ENCODE measurements at regions of chr2 and their contacts with region 1.

Region 1: GRCh38 chr2:138814120-138814898 is 34.1 kb upstream of the NXPH2 start:
- DNase-seq: peak; percentile 29
- ATAC-seq: peak; percentile 93
- H3K4me3 Mint-ChIP-seq: no peak overlapping the region
- H3K27ac Mint-ChIP-seq: no peak overlapping the region
- H3K4me1 Mint-ChIP-seq: peaks cover 14% of the 10 kb centered on the region
- H3K27me3 Mint-ChIP-seq: no peaks in the 10 kb centered on the region
- CTCF ChIP-seq: no peak

Region 2: GRCh38 chr2:138622613-138623012 is 191.7 kb before region 1 on chr2:
- CTCF ChIA-PET with region 1: no interaction called
- POLR2A ChIA-PET with region 1: no interaction called
- DNase-seq: no peak
- ATAC-seq: no peak
- H3K4me3 Mint-ChIP-seq: no peak overlapping the region
- H3K27ac Mint-ChIP-seq: no peak overlapping the region
- H3K4me1 Mint-ChIP-seq: no peaks in the 10 kb centered on the region
- H3K27me3 Mint-ChIP-seq: no peaks in the 10 kb centered on the region; the same call in 1 of the 2 replicates
- CTCF ChIP-seq: no peak

Region 3: DNA sequence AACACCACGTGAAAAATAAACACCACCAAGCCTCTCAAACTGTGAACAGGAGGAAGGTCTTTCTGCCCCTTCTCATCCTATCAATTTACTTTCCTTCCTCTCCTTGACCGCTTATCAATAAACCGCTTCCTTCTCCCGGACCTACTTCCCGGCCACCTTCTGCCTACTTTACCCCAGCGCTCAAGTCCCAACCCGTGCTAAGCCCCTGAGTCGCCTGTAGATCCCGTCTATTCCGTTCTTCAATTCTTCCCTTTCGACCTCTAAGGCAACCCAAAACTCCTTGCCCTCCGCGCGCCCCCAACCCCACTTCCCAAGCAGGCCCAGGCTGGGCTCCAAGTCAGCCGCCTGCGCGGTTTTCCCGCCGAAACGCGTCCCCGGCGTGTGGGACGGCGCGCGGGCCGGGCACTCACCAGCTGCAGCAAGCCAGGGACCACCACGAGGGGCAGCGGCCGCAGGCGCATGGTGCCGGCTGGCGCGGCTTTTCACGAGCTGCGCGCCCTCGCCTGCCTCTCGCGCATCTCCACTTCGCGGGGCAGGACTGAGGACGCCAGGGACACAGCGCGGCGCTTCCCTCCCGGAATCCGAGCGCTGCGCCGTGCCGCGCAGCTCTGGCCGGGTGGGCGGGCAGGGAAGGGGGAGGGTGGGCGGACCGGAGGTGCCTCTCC is 34.4 kb before region 1 on chr2 and contains the start of gene NXPH2:
- CTCF ChIA-PET with region 1: interaction called, 10 read pairs
- POLR2A ChIA-PET with region 1: no interaction called
- DNase-seq: peak; percentile 59
- ATAC-seq: peak; percentile 20
- H3K4me3 Mint-ChIP-seq: peak within 1 kb of the TSS; percentile 83
- H3K27ac Mint-ChIP-seq: no peak within 1 kb of the TSS
- H3K4me1 Mint-ChIP-seq: peaks cover 45% of the 10 kb centered on the region
- H3K27me3 Mint-ChIP-seq: peaks cover 63% of the 10 kb centered on the region
- CTCF ChIP-seq: no peak
- total RNA-seq, gene NXPH2: 0.55 to 0.94 TPM (median 0.92 TPM) in 3 replicates

Region 4: DNA sequence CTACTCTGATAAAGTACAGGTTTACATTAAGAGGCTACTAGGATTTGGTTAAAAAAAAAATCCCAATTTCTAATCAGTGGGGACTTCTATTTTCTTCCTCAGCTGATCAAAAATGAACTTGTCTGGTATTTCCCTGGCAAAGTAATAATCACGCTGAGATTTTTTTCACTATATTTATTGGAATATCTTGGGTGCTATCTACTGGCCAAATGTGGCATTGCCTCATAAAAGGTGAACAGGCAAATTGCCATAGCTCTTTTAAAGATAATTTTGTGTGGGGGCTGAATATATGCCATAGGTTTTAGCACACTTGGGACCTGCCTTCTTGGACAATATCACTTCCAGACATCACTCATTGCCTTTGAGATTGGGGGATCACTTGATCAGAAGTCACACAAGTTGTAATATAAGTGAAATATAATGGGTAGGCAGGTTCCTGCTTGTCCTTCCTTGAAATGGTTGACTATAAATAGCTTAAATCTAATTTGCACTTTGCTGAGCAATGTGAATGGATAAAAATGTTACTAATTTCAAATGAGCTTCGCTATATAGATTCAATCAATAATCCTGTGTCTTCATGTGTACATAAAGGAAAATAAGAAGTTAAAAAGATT is 27.1 kb before region 1 on chr2:
- CTCF ChIA-PET with region 1: interaction called, 16 read pairs
- POLR2A ChIA-PET with region 1: no interaction called
- DNase-seq: no peak
- ATAC-seq: peak; percentile 41; the same call in 1 of the 2 replicates
- H3K4me3 Mint-ChIP-seq: no peak overlapping the region
- H3K27ac Mint-ChIP-seq: no peak overlapping the region
- H3K4me1 Mint-ChIP-seq: peaks cover 2% of the 10 kb centered on the region
- H3K27me3 Mint-ChIP-seq: peaks cover 33% of the 10 kb centered on the region
- CTCF ChIP-seq: peak; percentile 47

Region 5: GRCh38 chr2:139045524-139045923 is 231.2 kb after region 1 on chr2:
- CTCF ChIA-PET with region 1: no interaction called
- POLR2A ChIA-PET with region 1: no interaction called
- DNase-seq: no peak
- ATAC-seq: peak; percentile 98
- H3K4me3 Mint-ChIP-seq: peak overlapping the region; percentile 11; the same call in 1 of the 2 replicates
- H3K27ac Mint-ChIP-seq: peak overlapping the region; percentile 82
- H3K4me1 Mint-ChIP-seq: peaks cover 43% of the 10 kb centered on the region
- H3K27me3 Mint-ChIP-seq: peaks cover 5% of the 10 kb centered on the region
- CTCF ChIP-seq: no peak